A549 (cell line): ENCODE measurements at regions of chr5 and their contacts with region 1.

Region 1: GRCh38 chr5:150350524-150351344 is 6.8 kb upstream of the TCOF1 start:
- DNase-seq: peak; percentile 83 to 84
- ATAC-seq: peak; percentile 94 to 96
- H3K4me3 ChIP-seq: no peak overlapping the region
- H3K27ac ChIP-seq: peak overlapping the region; percentile 46 to 72; a peak in 5 of 6 replicates
- H3K4me1 ChIP-seq: peaks cover 24% of the 10 kb centered on the region
- CTCF ChIP-seq: peak; percentile 93
- EP300 ChIP-seq: no peak
- POLR2A ChIP-seq: no peak
- RAD21 ChIP-seq: peak; percentile 97

Region 2: DNA sequence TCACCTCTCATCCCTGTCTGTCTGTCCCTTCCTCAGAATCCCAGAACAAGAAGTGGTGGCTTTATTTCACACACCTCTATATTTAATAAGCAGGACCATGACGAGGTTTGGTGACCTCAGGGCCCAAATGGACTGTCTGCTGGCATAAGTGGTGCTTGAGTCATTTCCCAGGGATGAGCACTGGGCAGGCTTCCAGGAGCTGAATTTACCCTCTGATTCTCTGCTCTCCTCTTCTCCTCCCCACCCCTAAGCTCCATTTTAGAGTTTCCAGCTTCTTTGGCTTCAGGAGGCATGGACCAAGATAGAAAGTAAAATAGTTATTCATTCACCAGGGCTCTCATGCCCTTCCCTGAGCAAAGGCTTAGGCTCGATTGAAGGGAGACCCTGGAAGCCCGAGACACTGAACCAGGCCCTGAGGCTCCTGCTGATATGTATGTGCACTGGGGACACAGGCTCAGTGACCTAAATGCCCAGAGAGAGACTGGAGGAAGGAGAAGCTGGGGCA is 551.6 kb before region 1 on chr5:
- CTCF ChIA-PET with region 1: no interaction called
- POLR2A ChIA-PET with region 1: no interaction called
- DNase-seq: peak; percentile 91 to 94
- ATAC-seq: peak; percentile 85 to 89
- H3K4me3 ChIP-seq: 0 out of 3 replicates have a peak overlapping the region, but pooled peaks have one; percentile 4
- H3K27ac ChIP-seq: peak overlapping the region; percentile 88 to 95
- H3K4me1 ChIP-seq: peaks cover 67% of the 10 kb centered on the region
- CTCF ChIP-seq: no peak
- EP300 ChIP-seq: no peak
- POLR2A ChIP-seq: no peak
- RAD21 ChIP-seq: no peak

Region 3: GRCh38 chr5:150175076-150175935 is 175.4 kb before region 1 on chr5:
- CTCF ChIA-PET with region 1: interaction called, 14 read pairs
- POLR2A ChIA-PET with region 1: no interaction called
- DNase-seq: peak; percentile 53 to 81
- ATAC-seq: peak; percentile 72 to 96
- H3K4me3 ChIP-seq: no peak overlapping the region
- H3K27ac ChIP-seq: no peak overlapping the region
- H3K4me1 ChIP-seq: no peaks in the 10 kb centered on the region
- CTCF ChIP-seq: peak; percentile 38
- EP300 ChIP-seq: no peak
- POLR2A ChIP-seq: no peak
- RAD21 ChIP-seq: peak in 1 of 2 experiments; percentile 42; a peak in 2 of 5 replicates

Region 4: DNA sequence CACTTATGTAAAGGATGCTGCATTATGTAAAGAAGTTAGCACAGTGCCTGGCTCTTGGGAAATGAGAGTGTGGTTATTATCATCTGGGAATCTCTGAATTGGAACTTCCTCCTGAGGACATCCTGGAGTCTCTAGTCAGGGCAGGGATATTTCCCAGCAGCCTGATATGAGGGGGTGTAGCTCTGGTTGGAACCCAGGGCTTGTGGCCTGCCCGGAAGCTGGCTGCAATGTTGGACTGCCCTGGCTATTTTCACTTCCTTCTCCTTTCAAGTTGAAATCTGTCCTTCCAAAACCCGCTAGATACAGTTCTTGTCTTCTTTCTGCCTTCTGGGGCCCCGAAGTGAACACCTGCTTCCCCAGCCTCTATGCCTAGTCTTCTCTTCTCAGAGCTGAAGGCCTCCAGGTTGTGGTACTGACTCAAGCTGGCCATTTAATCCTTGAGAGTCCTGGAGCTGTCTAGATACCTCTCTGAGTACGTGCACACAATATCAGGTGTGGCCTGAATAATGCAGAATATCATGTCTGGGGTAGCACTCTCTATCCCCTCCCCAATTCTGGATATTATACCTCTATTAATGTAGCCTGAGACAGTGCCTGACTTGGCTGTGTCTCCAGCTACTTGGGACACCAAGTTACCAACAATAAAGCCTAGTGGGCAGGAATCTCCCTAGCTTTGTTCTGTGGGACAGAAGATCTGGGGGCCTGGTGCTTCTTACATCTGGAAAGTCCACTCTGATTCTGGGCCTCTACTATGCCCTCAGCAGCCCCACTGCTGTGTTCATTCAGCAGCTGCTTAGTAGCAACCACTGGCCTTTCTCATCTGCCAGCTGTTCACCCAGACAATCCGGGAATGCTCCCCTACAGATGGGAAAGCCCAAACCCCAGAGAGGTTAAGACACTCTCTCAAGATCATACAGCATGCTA is 115.9 kb before region 1 on chr5:
- CTCF ChIA-PET with region 1: interaction called, 23 read pairs
- POLR2A ChIA-PET with region 1: no interaction called
- DNase-seq: no peak
- ATAC-seq: no peak
- H3K4me3 ChIP-seq: no peak overlapping the region
- H3K27ac ChIP-seq: no peak overlapping the region
- H3K4me1 ChIP-seq: no peaks in the 10 kb centered on the region
- CTCF ChIP-seq: no peak
- EP300 ChIP-seq: no peak
- POLR2A ChIP-seq: no peak
- RAD21 ChIP-seq: no peak

Region 5: DNA sequence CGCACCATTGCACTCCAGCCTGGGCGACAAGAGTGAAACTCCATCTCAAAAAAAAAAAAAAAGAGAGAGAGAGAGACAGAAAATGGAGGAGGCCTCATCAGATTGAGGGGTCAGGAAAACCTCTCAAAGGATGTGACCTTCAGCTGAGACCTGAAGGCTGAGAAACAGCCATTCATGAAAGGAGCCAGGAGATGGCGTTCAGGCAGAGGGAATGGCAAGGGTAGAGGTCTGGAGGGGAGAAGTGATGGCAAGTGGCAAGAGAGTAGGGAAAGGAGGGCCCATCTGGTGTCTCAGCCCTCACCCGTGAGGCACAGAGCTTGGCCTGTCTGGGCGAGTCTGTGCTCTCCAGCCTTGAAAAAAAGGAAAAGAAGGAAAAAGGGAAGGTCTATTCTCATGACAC is 78.2 kb before region 1 on chr5:
- CTCF ChIA-PET with region 1: interaction called, 155 read pairs
- POLR2A ChIA-PET with region 1: no interaction called
- DNase-seq: peak; percentile 57 to 59
- ATAC-seq: peak; percentile 74 to 91
- H3K4me3 ChIP-seq: no peak overlapping the region
- H3K27ac ChIP-seq: peak overlapping the region in 1 of 2 experiments; percentile 51; a peak in 1 of 6 replicates
- H3K4me1 ChIP-seq: peaks cover 10% of the 10 kb centered on the region; the same call in 2 of the 3 replicates
- CTCF ChIP-seq: peak; percentile 54
- EP300 ChIP-seq: no peak
- POLR2A ChIP-seq: no peak
- RAD21 ChIP-seq: peak; percentile 76 to 92

Region 6: GRCh38 chr5:150302301-150303069 is 48.2 kb before region 1 on chr5 and contains the start of gene ARSI:
- CTCF ChIA-PET with region 1: interaction called, 75 read pairs
- POLR2A ChIA-PET with region 1: no interaction called
- DNase-seq: peak; percentile 62 to 85
- ATAC-seq: peak; percentile 77 to 91
- H3K4me3 ChIP-seq: peak within 1 kb of the TSS; percentile 58
- H3K27ac ChIP-seq: peak within 1 kb of the TSS; percentile 87 to 90
- H3K4me1 ChIP-seq: peaks cover 66% of the 10 kb centered on the region
- CTCF ChIP-seq: peak; percentile 59
- EP300 ChIP-seq: no peak
- POLR2A ChIP-seq: no peak
- RAD21 ChIP-seq: peak; percentile 28 to 47; a peak in 4 of 5 replicates
- polyA plus RNA-seq, gene ARSI: 2.9 and 3.2 TPM in 2 replicates

Region 7: DNA sequence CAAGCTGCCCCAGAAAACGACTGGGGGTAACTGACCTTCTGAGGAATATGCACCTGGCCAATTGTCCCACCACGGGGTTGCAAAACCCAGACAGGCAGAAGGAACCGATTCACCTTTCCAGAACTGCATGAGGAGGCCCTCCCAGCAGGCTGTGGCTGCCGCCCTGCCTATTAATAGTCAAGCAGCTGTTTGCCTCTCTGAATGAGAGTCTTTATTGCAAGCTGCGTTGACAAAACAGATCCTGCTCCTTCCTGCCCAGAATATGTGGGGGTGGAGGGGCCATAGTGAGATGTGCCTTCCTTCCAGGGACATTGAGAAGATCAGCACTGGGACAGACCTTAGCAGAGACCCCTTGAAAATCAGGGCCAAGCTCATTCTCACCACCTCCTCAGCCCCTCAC is 11.6 kb before region 1 on chr5:
- CTCF ChIA-PET with region 1: interaction called, 58 read pairs
- POLR2A ChIA-PET with region 1: no interaction called
- DNase-seq: no peak
- ATAC-seq: no peak
- H3K4me3 ChIP-seq: no peak overlapping the region
- H3K27ac ChIP-seq: no peak overlapping the region
- H3K4me1 ChIP-seq: peaks cover 3% of the 10 kb centered on the region; the same call in 1 of the 3 replicates
- CTCF ChIP-seq: no peak
- EP300 ChIP-seq: no peak
- POLR2A ChIP-seq: no peak
- RAD21 ChIP-seq: no peak

Region 8: DNA sequence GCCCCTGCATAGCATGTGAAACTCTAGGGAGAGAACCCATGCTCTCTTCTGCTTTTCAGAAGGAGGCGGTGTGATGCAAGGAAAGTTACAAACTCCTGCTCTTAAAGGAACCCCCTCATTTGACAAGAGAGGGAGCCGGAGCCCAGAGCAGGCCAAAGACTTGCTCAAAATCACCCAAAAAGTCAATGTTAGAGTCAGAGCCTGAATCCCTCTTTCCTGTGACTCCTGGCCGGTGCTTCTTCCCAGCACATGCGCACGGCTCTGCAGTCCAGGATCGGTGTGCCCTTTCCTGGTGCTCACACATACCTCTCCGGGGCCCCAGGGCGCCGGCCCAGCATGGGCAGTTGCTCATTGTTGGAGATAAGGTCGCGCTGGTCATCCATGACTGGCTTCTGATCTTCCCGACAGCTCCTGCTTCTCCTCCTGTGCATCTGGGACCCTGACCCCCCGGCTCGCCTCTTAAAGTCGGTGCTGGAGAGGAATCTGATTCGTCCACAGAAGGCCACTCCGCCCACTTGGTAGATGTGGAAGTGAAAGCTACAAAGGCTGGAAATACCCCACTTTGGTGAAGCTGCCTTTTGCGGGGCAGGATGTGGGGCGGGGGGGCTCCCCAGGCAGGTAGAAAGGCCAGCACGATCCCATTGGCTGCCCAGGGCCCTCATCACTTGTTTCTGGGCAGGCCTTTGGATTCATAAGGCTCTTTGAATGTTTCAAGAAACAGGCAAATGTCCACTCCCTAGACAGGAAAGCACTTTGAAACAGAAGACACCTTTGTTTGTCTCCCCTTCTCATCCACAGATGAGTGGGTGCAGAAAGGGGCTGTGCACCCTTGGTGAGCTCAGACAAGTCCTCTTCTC is 61.8 kb after region 1 on chr5 and contains the start of gene CD74:
- CTCF ChIA-PET with region 1: no interaction called
- POLR2A ChIA-PET with region 1: no interaction called
- DNase-seq: no peak
- ATAC-seq: peak in 1 of 2 experiments; percentile 34; a peak in 3 of 6 replicates
- H3K4me3 ChIP-seq: no peak within 1 kb of the TSS
- H3K27ac ChIP-seq: no peak within 1 kb of the TSS
- H3K4me1 ChIP-seq: peaks cover 4% of the 10 kb centered on the region
- CTCF ChIP-seq: no peak
- EP300 ChIP-seq: no peak
- POLR2A ChIP-seq: no peak
- RAD21 ChIP-seq: no peak
- polyA plus RNA-seq, gene CD74: not detected in 2 replicates